HepG2 (cell line): ENCODE measurements at regions of chr1 and their contacts with region 1.

Region 1: GRCh38 chr1:229410692-229411443 is 23.0 kb downstream of the ACTA1 start:
- DNase-seq: no peak
- ATAC-seq: no peak
- H3K4me3 ChIP-seq: no peak overlapping the region
- H3K27ac ChIP-seq: no peak overlapping the region
- H3K4me1 ChIP-seq: peaks cover 62% of the 10 kb centered on the region
- H3K27me3 ChIP-seq: peaks cover 2 to 8% of the 10 kb centered on the region in 2 experiments; a peak in 3 of 5 replicates
- CTCF ChIP-seq: no peak
- EP300 ChIP-seq: no peak
- POLR2A ChIP-seq: no peak
- RAD21 ChIP-seq: no peak

Region 2: DNA sequence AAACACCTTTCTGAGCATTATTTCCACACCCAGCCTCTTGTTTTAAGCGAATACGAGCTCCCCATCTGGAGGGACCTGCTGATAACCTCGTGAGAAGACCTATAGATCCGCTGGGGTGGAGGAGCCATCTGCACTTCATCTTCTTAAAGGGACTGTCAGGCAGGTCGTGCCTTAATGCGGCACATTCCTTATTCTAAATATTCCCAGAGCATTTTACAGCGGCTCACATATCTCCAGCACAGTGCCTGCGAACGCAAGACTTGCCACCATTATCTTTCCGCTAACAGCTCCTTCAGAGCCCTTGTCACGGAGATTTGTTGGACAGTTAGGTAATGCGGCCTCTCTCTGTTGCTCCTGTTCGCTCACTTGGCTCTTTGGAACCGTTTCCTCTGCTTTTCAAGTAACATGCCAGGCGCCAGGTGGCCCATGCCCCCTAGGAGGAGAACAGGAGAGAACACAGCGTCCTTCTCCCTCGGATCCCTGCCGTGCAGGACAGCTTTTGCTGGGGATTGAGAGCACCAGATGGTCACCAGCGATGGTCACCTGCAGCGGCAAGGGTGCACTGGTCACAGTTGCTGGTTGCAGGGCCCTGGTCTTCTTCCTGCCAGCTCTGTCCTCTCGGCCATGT is 852.8 kb after region 1 on chr1:
- CTCF ChIA-PET with region 1: no interaction called
- POLR2A ChIA-PET with region 1: no interaction called
- in situ Hi-C with region 1: no loop called
- intact Hi-C with region 1: loop called (anchors 5 kb)
- DNase-seq: no peak
- ATAC-seq: no peak
- H3K4me3 ChIP-seq: no peak overlapping the region
- H3K27ac ChIP-seq: no peak overlapping the region
- H3K4me1 ChIP-seq: no peaks in the 10 kb centered on the region
- H3K27me3 ChIP-seq: no peaks in the 10 kb centered on the region; a peak in 1 of 5 replicates
- CTCF ChIP-seq: no peak
- EP300 ChIP-seq: no peak
- POLR2A ChIP-seq: no peak
- RAD21 ChIP-seq: no peak